ENCODE measurements at regions of chr6 and their contacts with region 1.

Region 1: GRCh38 chr6:14575961-14576360 is 458.4 kb downstream of the CD83 start:
- DNase-seq: no peak
- ATAC-seq: no peak
- H3K4me3 ChIP-seq: no peak overlapping the region
- H3K4me3 Mint-ChIP-seq: no peak overlapping the region
- H3K27ac ChIP-seq: no peak overlapping the region
- H3K27ac Mint-ChIP-seq: no peak overlapping the region
- H3K4me1 ChIP-seq: no peaks in the 10 kb centered on the region
- H3K4me1 Mint-ChIP-seq: peaks cover 0 to 5% (median 0%) of the 10 kb centered on the region in 7 donors
- H3K27me3 ChIP-seq: no peaks in the 10 kb centered on the region
- H3K27me3 Mint-ChIP-seq: peaks cover 0 to 2% (median 0%) of the 10 kb centered on the region in 5 donors

Region 2: GRCh38 chr6:14533446-14533845 is 42.5 kb before region 1 on chr6:
- CTCF ChIA-PET with region 1: no interaction called
- POLR2A ChIA-PET with region 1: no interaction called
- intact Hi-C with region 1: loop called in 1 of 2 experiments (anchors 2 kb)
- DNase-seq: no peak
- ATAC-seq: no peak
- H3K4me3 ChIP-seq: no peak overlapping the region
- H3K4me3 Mint-ChIP-seq: no peak overlapping the region
- H3K27ac ChIP-seq: no peak overlapping the region
- H3K27ac Mint-ChIP-seq: no peak overlapping the region
- H3K4me1 ChIP-seq: no peaks in the 10 kb centered on the region
- H3K4me1 Mint-ChIP-seq: peaks cover 0 to 2% (median 0%) of the 10 kb centered on the region in 7 donors
- H3K27me3 ChIP-seq: no peaks in the 10 kb centered on the region
- H3K27me3 Mint-ChIP-seq: peaks cover 0 to 3% (median 0%) of the 10 kb centered on the region in 5 donors